ENCODE measurements at regions of chr11 and their contacts with region 1.

Region 1: GRCh38 chr11:73661035-73661628 is 14.8 kb downstream of the PLEKHB1 start:
- DNase-seq: peak; percentile 88
- ATAC-seq: peak; percentile 97
- H3K4me3 ChIP-seq: peak overlapping the region in 4 of 5 experiments; percentile 6 to 30 (median 22)
- H3K4me3 Mint-ChIP-seq: peak overlapping the region; percentile 68
- H3K27ac ChIP-seq: no peak overlapping the region
- H3K27ac Mint-ChIP-seq: no peak overlapping the region
- H3K4me1 ChIP-seq: peaks cover 9 to 10% of the 10 kb centered on the region in 2 donors
- H3K4me1 Mint-ChIP-seq: peaks cover 14% of the 10 kb centered on the region
- H3K27me3 ChIP-seq: peaks cover 0 to 13% (median 4%) of the 10 kb centered on the region in 4 experiments
- H3K27me3 Mint-ChIP-seq: peaks cover 7% of the 10 kb centered on the region
- CTCF ChIP-seq: peak; percentile 99

Region 2: DNA sequence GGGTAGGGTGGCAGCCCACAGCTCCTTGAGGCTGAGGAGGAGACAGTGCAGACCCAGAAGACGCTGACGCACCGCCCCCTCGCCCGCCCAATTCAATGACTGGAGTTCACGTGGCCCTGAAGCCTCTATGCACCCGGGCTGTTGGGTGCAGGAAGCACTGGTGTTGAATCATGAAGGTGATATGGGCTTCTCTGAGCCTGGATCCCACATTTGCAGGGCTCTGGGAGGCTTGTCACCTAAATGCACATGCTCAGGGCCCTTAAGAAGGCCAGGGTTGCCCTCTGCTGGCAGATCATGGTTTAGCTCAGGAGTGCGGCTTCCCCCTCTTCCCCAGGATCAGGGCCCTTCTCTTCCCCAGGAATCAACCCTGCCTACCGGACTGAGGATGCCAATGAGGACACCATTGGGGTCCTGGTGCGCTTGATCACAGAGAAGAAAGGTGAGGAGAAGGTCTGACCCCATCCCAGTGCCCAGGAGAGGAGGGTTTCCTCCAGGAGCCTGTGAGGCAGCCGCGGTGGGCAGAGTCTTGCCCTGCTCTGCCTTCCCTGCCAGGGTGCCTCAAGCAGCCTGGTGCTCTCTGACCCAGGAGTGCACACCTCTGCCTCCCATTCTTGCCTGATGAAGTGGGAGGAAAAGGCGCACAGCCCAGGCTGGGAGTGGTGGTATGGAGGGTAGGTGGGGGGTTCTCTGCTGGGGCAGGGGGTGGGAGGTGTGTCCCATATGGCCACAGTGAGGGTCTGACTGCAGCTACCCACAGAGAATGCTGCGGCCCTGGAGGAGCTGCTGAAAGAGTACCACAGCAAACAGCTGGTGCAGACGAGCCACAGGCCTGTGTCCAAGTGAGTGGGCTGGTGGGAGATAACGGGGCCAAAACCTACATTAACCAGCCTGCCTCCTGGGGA is 267.4 kb before region 1 on chr11:
- CTCF ChIA-PET with region 1: interaction called, 11 read pairs
- POLR2A ChIA-PET with region 1: no interaction called
- intact Hi-C with region 1: no loop called
- DNase-seq: peak; percentile 82
- ATAC-seq: peak; percentile 77
- H3K4me3 ChIP-seq: no peak overlapping the region
- H3K4me3 Mint-ChIP-seq: no peak overlapping the region
- H3K27ac ChIP-seq: peak overlapping the region in 1 of 2 donors; percentile 61
- H3K27ac Mint-ChIP-seq: peak overlapping the region; percentile 74
- H3K4me1 ChIP-seq: peaks cover 19 to 35% of the 10 kb centered on the region in 2 donors
- H3K4me1 Mint-ChIP-seq: peaks cover 30% of the 10 kb centered on the region
- H3K27me3 ChIP-seq: no peaks in the 10 kb centered on the region
- H3K27me3 Mint-ChIP-seq: no peaks in the 10 kb centered on the region
- CTCF ChIP-seq: peak; percentile 78

Region 3: DNA sequence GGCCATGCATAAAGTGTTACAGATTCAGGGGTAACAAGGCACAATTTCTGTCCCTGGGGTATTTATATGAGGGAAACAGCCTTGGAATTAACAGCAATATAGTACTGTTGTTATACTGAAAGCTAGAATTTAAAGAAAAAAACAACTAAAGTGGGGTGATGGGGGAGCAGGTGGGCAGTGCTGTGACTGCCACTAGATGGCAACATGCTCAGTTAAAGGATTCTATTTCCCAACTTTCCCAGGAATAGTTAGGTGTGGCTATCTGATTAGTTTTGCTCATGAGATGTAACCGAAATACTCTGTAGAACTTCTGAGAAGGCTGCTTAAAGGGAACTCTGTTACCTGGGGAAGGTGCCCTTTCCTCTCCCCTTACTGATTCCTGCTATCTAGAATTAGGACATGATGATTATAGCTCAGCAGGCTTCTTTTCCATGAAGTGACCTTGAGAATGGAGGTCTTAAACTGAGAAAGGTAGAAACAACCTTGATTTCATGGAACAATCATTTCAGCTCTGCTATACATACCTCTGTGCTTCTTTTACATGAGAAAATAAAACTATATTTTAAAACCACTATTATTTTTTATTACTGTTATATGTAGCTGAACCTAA is 182.3 kb before region 1 on chr11:
- CTCF ChIA-PET with region 1: interaction called, 17 read pairs
- POLR2A ChIA-PET with region 1: no interaction called
- intact Hi-C with region 1: no loop called
- DNase-seq: no peak
- ATAC-seq: no peak
- H3K4me3 ChIP-seq: no peak overlapping the region
- H3K4me3 Mint-ChIP-seq: no peak overlapping the region
- H3K27ac ChIP-seq: no peak overlapping the region
- H3K27ac Mint-ChIP-seq: no peak overlapping the region
- H3K4me1 ChIP-seq: no peaks in the 10 kb centered on the region
- H3K4me1 Mint-ChIP-seq: no peaks in the 10 kb centered on the region
- H3K27me3 ChIP-seq: no peaks in the 10 kb centered on the region
- H3K27me3 Mint-ChIP-seq: no peaks in the 10 kb centered on the region
- CTCF ChIP-seq: no peak

Region 4: DNA sequence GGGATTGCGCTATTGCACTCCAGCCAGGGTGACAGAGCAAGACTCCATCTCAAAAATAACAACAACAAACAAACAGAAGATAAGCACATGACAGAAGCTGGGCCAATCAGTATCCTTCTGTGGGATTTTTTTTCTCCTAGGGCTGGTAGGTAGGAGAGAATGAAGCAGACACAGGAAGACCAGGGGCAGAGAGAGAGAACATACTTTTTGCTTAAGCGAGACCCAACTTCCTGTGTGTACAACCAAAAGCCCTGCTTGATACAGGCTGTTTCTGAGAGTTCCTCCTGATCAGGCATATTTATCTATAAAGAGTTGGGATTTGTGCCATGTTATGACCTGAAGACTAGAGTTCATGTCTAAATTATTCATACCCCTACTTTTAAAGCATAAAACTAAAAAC is 27.1 kb before region 1 on chr11:
- CTCF ChIA-PET with region 1: interaction called, 11 read pairs
- POLR2A ChIA-PET with region 1: no interaction called
- intact Hi-C with region 1: no loop called
- DNase-seq: no peak
- ATAC-seq: no peak
- H3K4me3 ChIP-seq: no peak overlapping the region
- H3K4me3 Mint-ChIP-seq: no peak overlapping the region
- H3K27ac ChIP-seq: no peak overlapping the region
- H3K27ac Mint-ChIP-seq: no peak overlapping the region
- H3K4me1 ChIP-seq: no peaks in the 10 kb centered on the region
- H3K4me1 Mint-ChIP-seq: no peaks in the 10 kb centered on the region
- H3K27me3 ChIP-seq: no peaks in the 10 kb centered on the region
- H3K27me3 Mint-ChIP-seq: no peaks in the 10 kb centered on the region
- CTCF ChIP-seq: no peak